Endothelial cell of umbilical vein (primary cell): ENCODE measurements at regions of chr5 and their contacts with region 1.

Region 1: GRCh38 chr5:98349251-98349995 is 424.0 kb upstream of the RGMB start:
- DNase-seq: peak; percentile 29
- H3K4me3 ChIP-seq: no peak overlapping the region
- H3K27ac ChIP-seq: peak overlapping the region; percentile 18
- H3K4me1 ChIP-seq: no peaks in the 10 kb centered on the region
- H3K27me3 ChIP-seq: no peaks in the 10 kb centered on the region
- CTCF ChIP-seq: peak; percentile 16 to 47
- POLR2A ChIP-seq: no peak

Region 2: GRCh38 chr5:97162045-97162444 is 1187.4 kb before region 1 on chr5:
- CTCF ChIA-PET with region 1: no interaction called
- POLR2A ChIA-PET with region 1: no interaction called
- dilution Hi-C with region 1: no loop called
- intact Hi-C with region 1: loop called (anchors 5 kb)
- DNase-seq: peak; percentile 86
- H3K4me3 ChIP-seq: no peak overlapping the region
- H3K27ac ChIP-seq: no peak overlapping the region
- H3K4me1 ChIP-seq: no peaks in the 10 kb centered on the region
- H3K27me3 ChIP-seq: no peaks in the 10 kb centered on the region
- CTCF ChIP-seq: peak; percentile 68 to 79
- POLR2A ChIP-seq: no peak

Region 3: DNA sequence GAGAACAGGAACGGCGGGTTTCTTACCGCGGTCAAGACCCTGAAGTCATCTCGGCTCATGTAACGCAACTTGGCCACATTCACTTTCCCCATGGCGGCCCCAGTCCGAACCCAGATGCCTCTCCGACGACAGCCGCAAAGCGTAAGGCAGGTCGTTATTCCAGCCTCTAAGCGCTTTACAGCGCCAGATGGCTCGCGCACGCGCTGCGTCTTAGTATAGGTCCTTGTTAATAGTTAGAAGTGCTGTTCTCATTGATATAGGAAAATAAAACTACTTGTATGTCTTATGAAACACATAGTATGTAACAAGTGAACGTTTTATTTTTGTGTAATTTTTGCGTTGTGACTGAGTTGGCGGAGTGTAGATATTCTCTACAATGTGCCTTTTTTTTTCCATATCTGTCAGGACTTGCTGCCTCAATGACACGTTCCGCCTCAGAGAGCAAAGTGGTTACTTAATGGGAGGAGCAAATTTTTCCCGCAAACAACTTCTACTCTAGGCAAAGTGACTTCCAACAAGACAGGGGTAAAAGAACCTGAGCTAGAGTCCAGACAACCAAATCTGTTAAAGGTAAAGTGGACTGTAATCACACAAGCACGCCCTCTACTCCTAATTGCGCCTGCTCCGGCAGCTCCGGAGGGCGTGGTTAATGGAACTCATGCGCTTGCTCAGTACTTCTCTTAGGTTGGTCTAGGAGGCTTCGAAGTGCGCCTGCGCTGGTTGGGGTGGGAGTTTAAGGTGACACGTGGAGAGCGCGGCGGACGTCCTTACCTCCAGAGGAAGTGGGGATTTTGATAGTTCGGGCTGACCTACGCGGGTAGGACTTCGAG is 1166.1 kb before region 1 on chr5 and contains the start of gene RIOK2:
- CTCF ChIA-PET with region 1: no interaction called
- POLR2A ChIA-PET with region 1: no interaction called
- dilution Hi-C with region 1: no loop called
- intact Hi-C with region 1: loop called (anchors 5 kb)
- DNase-seq: peak; percentile 99
- H3K4me3 ChIP-seq: peak within 1 kb of the TSS; percentile 83 to 97 (median 91)
- H3K27ac ChIP-seq: peak within 1 kb of the TSS; percentile 85
- H3K4me1 ChIP-seq: peaks cover 15% of the 10 kb centered on the region
- H3K27me3 ChIP-seq: no peaks in the 10 kb centered on the region
- CTCF ChIP-seq: no peak
- POLR2A ChIP-seq: peak; percentile 81
- total RNA-seq, gene RIOK2: 17.5 and 25.4 TPM in 2 replicates

Region 4: GRCh38 chr5:97297063-97297703 is 1052.2 kb before region 1 on chr5:
- CTCF ChIA-PET with region 1: no interaction called
- POLR2A ChIA-PET with region 1: no interaction called
- dilution Hi-C with region 1: no loop called
- intact Hi-C with region 1: loop called (anchors 2 kb)
- DNase-seq: peak; percentile 43
- H3K4me3 ChIP-seq: no peak overlapping the region
- H3K27ac ChIP-seq: no peak overlapping the region
- H3K4me1 ChIP-seq: no peaks in the 10 kb centered on the region
- H3K27me3 ChIP-seq: no peaks in the 10 kb centered on the region
- CTCF ChIP-seq: peak; percentile 40 to 47
- POLR2A ChIP-seq: no peak

Region 5: DNA sequence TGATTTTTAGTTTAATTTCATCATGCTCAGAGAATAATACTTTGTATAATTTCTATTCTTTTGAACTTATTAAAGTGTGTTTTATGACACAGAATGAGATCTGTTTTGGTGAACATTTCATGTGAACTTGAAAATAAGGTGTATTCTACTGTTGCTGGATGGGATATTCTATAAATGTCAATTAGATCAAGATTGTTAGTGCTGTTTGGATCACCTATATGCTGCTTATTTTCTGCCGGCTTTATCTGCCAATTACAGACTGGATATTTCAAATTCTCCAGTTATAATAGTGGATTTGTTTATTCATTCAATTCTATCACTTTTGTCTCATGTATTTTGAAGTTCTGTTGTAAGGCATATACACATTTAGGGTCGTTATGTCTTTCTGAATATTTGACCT is 445.7 kb before region 1 on chr5:
- CTCF ChIA-PET with region 1: no interaction called
- POLR2A ChIA-PET with region 1: no interaction called
- dilution Hi-C with region 1: no loop called
- intact Hi-C with region 1: loop called (anchors 1 kb)
- DNase-seq: no peak
- H3K4me3 ChIP-seq: no peak overlapping the region
- H3K27ac ChIP-seq: no peak overlapping the region
- H3K4me1 ChIP-seq: no peaks in the 10 kb centered on the region
- H3K27me3 ChIP-seq: no peaks in the 10 kb centered on the region
- CTCF ChIP-seq: no peak
- POLR2A ChIP-seq: no peak

Region 6: GRCh38 chr5:98299435-98299834 is 50.0 kb before region 1 on chr5:
- CTCF ChIA-PET with region 1: no interaction called
- POLR2A ChIA-PET with region 1: no interaction called
- dilution Hi-C with region 1: no loop called
- intact Hi-C with region 1: no loop called
- DNase-seq: no peak
- H3K4me3 ChIP-seq: no peak overlapping the region
- H3K27ac ChIP-seq: no peak overlapping the region
- H3K4me1 ChIP-seq: peaks cover 3% of the 10 kb centered on the region
- H3K27me3 ChIP-seq: no peaks in the 10 kb centered on the region
- CTCF ChIP-seq: no peak
- POLR2A ChIP-seq: no peak

Region 7: DNA sequence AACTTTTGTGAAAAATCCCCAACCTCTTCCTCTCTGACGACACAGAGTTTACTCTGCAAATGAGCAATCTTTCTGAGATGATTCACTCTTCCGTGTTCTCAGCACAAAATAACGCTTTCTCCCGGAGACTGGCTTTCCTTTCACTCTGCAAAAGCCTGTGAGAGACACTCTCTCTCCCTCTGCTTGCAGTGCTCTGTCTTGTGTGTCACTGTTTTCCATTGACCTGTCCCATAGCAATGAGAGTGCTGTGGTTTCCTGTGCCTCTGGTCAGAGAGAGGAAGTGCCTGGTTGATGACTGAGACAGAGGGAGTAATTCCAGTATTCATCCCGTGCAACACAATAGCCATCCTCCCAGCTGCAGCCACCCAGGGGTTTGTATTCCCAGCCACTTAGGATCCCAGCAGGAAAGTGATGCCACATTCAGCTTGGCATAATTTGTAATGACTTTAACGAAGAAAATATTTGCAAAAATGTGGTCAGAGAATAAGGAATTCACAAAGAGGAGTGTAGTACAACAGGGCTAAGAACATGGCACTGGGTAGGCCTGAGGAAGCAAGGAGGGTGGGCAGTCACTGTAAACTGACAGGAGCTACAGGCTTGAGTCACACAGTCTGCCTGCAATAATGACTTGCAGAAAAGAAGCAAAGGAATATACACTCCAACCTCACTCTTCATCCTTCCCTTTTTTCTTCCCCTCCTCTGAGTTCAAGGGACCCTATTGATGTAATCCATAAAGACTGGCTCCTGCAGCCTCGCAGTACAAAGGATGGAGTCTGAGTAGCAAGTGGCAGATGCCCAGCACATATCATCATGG is 39.4 kb before region 1 on chr5:
- CTCF ChIA-PET with region 1: no interaction called
- POLR2A ChIA-PET with region 1: no interaction called
- dilution Hi-C with region 1: no loop called
- intact Hi-C with region 1: loop called (anchors 5 kb)
- DNase-seq: peak; percentile 95
- H3K4me3 ChIP-seq: peak overlapping the region in 2 of 3 experiments; percentile 10 to 72
- H3K27ac ChIP-seq: peak overlapping the region; percentile 97
- H3K4me1 ChIP-seq: peaks cover 63% of the 10 kb centered on the region
- H3K27me3 ChIP-seq: no peaks in the 10 kb centered on the region
- CTCF ChIP-seq: no peak
- POLR2A ChIP-seq: no peak

Region 8: GRCh38 chr5:98492258-98492657 is 142.8 kb after region 1 on chr5:
- CTCF ChIA-PET with region 1: no interaction called
- POLR2A ChIA-PET with region 1: no interaction called
- dilution Hi-C with region 1: no loop called
- intact Hi-C with region 1: no loop called
- DNase-seq: peak; percentile 40
- H3K4me3 ChIP-seq: no peak overlapping the region
- H3K27ac ChIP-seq: no peak overlapping the region
- H3K4me1 ChIP-seq: peaks cover 10% of the 10 kb centered on the region
- H3K27me3 ChIP-seq: no peaks in the 10 kb centered on the region
- CTCF ChIP-seq: no peak
- POLR2A ChIP-seq: no peak

Region 9: GRCh38 chr5:98975682-98976407 is 626.4 kb after region 1 on chr5:
- CTCF ChIA-PET with region 1: no interaction called
- POLR2A ChIA-PET with region 1: no interaction called
- dilution Hi-C with region 1: no loop called
- intact Hi-C with region 1: no loop called
- DNase-seq: no peak
- H3K4me3 ChIP-seq: no peak overlapping the region
- H3K27ac ChIP-seq: no peak overlapping the region
- H3K4me1 ChIP-seq: no peaks in the 10 kb centered on the region
- H3K27me3 ChIP-seq: no peaks in the 10 kb centered on the region
- CTCF ChIP-seq: no peak
- POLR2A ChIP-seq: no peak